ENCODE measurements at regions of chr1 and their contacts with region 1.

Region 1: DNA sequence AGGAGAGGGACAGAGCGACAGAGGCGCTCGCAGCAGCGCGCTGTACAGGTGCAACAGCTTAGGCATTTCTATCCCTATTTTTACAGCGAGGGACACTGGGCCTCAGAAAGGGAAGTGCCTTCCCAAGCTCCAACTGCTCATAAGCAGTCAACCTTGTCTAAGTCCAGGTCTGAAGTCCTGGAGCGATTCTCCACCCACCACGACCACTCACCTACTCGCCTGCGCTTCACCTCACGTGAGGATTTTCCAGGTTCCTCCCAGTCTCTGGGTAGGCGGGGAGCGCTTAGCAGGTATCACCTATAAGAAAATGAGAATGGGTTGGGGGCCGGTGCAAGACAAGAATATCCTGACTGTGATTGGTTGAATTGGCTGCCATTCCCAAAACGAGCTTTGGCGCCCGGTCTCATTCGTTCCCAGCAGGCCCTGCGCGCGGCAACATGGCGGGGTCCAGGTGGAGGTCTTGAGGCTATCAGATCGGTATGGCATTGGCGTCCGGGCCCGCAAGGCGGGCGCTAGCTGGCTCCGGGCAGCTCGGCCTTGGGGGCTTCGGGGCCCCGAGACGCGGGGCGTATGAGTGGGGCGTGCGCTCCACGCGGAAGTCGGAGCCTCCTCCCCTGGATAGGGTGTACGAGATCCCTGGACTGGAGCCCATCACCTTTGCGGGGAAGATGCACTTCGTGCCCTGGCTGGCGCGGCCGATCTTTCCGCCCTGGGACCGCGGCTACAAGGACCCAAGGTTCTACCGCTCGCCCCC is at the starts of genes CYB5RL and MRPL37:
- DNase-seq: peak; percentile 91
- H3K4me3 Mint-ChIP-seq: peak within 1 kb of the TSS; percentile 85
- H3K27ac Mint-ChIP-seq: peak within 1 kb of the TSS; percentile 71
- H3K4me1 Mint-ChIP-seq: peaks cover 37% of the 10 kb centered on the region
- H3K27me3 Mint-ChIP-seq: no peaks in the 10 kb centered on the region
- total RNA-seq, gene CYB5RL: 8.9 to 10.0 TPM
- total RNA-seq, gene MRPL37: 88.0 to 91.9 TPM

Region 2: GRCh38 chr1:54016313-54017262 is 183.4 kb before region 1 on chr1:
- CTCF ChIA-PET with region 1: no interaction called
- POLR2A ChIA-PET with region 1: no interaction called
- DNase-seq: no peak
- H3K4me3 Mint-ChIP-seq: no peak overlapping the region
- H3K27ac Mint-ChIP-seq: no peak overlapping the region
- H3K4me1 Mint-ChIP-seq: no peaks in the 10 kb centered on the region
- H3K27me3 Mint-ChIP-seq: no peaks in the 10 kb centered on the region

Region 3: GRCh38 chr1:54180701-54181360 is 19.1 kb before region 1 on chr1:
- CTCF ChIA-PET with region 1: interaction called, 18 read pairs
- POLR2A ChIA-PET with region 1: interaction called, 8 read pairs
- DNase-seq: no peak
- H3K4me3 Mint-ChIP-seq: no peak overlapping the region
- H3K27ac Mint-ChIP-seq: no peak overlapping the region
- H3K4me1 Mint-ChIP-seq: no peaks in the 10 kb centered on the region
- H3K27me3 Mint-ChIP-seq: no peaks in the 10 kb centered on the region

Region 4: DNA sequence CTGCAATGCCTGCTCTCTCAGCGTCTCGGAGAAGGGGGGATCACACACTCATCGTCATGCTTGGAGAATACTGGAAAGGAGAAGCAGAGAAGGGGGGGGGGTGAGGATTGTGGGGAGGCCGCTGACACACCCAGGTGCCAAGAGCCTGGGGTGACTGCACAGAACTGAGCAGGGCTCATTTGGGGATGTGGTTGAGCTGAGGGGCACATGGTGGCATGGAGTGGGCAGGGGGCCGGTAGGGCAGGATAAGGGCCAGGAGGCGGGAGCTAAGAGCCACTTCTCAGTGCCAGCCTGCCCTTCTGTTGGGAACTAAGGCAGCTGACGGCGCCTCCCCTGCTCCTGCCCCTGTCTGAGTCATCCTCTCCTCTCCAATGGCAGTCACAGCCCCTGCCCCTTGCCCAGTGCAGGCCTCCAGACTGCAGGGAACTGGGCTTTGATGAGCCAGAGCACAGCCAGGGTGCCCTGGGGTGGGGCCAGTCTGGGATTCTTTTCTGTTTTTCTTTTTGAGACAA is 27.2 kb after region 1 on chr1:
- CTCF ChIA-PET with region 1: interaction called, 3 read pairs
- POLR2A ChIA-PET with region 1: interaction called, 21 read pairs
- DNase-seq: no peak
- H3K4me3 Mint-ChIP-seq: no peak overlapping the region
- H3K27ac Mint-ChIP-seq: peak overlapping the region; percentile 35
- H3K4me1 Mint-ChIP-seq: peaks cover 51% of the 10 kb centered on the region
- H3K27me3 Mint-ChIP-seq: no peaks in the 10 kb centered on the region

Region 5: GRCh38 chr1:54406339-54407153 is 206.6 kb after region 1 on chr1 and contains the start of gene SSBP3:
- CTCF ChIA-PET with region 1: no interaction called
- POLR2A ChIA-PET with region 1: interaction called, 18 read pairs
- DNase-seq: peak; percentile 94
- H3K4me3 Mint-ChIP-seq: peak within 1 kb of the TSS; percentile 90
- H3K27ac Mint-ChIP-seq: peak within 1 kb of the TSS; percentile 95
- H3K4me1 Mint-ChIP-seq: peaks cover 66% of the 10 kb centered on the region
- H3K27me3 Mint-ChIP-seq: no peaks in the 10 kb centered on the region
- total RNA-seq, gene SSBP3: 90.0 TPM

Measured in activated CD4-positive, alpha-beta memory T cell treated with anti-CD3 and anti-CD28 coated beads, Interleukin-2, amount 10 ng/mL, durations not matched to agents 7 days and 5 days (primary cell).